ENCODE measurements at regions of chr1 and their contacts with region 1.

Region 1: DNA sequence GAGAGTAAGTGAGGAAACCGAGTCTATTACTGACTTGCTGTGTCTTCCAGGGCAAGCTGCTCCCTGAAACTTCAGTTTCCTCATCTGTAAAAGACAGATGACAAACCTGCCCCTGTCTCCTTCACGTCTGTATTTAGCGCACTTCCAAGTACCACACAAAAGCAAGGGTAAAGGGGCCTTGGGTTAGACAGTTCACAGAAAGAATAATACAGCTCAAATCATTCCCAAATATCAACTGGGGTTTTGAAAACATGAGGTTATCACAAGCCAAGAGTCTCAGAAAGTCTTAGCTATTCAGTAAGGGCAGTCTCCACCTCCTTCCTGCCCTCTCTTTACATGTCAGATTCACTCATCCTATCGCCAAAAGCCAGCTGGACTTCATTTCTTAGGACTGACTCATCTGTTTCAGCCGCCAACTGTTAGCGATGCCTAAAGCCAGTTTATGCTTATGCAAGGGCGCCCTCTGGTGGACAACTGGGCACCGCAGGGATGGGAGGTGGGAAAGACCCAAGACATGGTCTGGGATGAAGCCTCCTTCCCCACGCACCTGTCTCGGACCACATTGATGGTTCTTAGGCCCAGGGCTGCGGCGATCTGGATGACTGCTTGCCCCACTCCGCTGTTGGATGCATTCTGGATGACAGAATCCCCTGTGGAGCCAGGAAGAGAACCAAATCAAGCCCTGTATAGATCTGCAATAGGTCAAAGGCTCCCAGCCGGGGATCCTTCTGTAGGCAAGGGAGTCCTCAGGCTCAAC is 21.1 kb upstream of the SRSF4 start:
- DNase-seq: peak; percentile 78
- H3K4me3 Mint-ChIP-seq: no peak overlapping the region
- H3K27ac Mint-ChIP-seq: no peak overlapping the region
- H3K4me1 Mint-ChIP-seq: peaks cover 11% of the 10 kb centered on the region
- H3K27me3 Mint-ChIP-seq: no peaks in the 10 kb centered on the region

Region 2: GRCh38 chr1:29033829-29034466 is 168.8 kb before region 1 on chr1:
- intact Hi-C with region 1: loop called (anchors 1 kb)
- DNase-seq: no peak
- H3K4me3 Mint-ChIP-seq: no peak overlapping the region
- H3K27ac Mint-ChIP-seq: no peak overlapping the region
- H3K4me1 Mint-ChIP-seq: no peaks in the 10 kb centered on the region
- H3K27me3 Mint-ChIP-seq: no peaks in the 10 kb centered on the region

Region 3: GRCh38 chr1:29062157-29062942 is 140.4 kb before region 1 on chr1:
- intact Hi-C with region 1: loop called (anchors 5 kb)
- DNase-seq: no peak
- H3K4me3 Mint-ChIP-seq: peak overlapping the region; percentile 46
- H3K27ac Mint-ChIP-seq: peak overlapping the region; percentile 97
- H3K4me1 Mint-ChIP-seq: peaks cover 23% of the 10 kb centered on the region
- H3K27me3 Mint-ChIP-seq: no peaks in the 10 kb centered on the region

Region 4: DNA sequence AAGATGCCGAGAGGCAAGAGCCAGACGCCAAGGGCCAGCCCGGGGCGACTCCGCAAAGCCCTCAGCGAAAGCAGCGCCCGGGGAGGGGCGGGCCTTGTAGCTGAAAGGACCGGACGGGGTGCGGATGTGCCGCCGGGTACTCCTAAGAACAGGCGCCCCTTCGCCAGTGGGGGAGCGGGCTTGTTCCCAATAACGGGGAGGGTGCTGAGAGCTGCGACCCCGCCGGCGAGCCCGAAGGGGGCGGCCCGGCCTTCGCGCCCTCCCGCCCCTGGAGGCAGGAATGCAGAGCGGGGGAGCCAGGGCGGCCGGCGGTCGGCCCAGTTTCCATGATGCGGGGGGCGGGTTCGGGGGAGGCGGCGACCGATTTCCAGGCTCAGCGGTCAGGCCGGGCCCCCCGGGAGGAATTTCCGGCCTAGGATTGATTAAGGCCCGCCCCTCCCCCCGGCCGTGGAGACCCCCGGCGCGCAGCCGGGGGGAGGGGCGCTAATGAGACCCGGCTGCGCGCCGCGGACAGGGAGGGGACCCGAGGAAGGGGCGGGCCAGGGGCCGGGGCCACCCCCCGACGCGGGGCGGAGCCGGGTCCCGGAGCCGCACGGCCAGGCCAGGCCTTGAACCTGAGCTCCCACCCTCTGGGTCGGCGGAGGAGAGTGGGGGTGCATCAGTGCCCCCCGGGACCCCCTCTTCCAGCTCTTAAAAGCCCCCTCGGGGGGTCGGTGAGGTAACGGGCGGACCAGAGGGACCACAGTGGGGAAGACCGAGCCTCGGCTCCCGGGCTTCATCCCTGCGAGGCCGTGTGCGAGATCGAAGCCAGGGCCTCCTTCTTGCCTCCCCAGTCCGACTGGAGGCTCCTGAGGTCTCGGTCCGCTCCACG is 78.2 kb before region 1 on chr1:
- intact Hi-C with region 1: loop called (anchors 1 kb)
- DNase-seq: peak; percentile 46
- H3K4me3 Mint-ChIP-seq: peak overlapping the region; percentile 82
- H3K27ac Mint-ChIP-seq: peak overlapping the region; percentile 23
- H3K4me1 Mint-ChIP-seq: no peaks in the 10 kb centered on the region
- H3K27me3 Mint-ChIP-seq: peaks cover 29% of the 10 kb centered on the region

Region 5: DNA sequence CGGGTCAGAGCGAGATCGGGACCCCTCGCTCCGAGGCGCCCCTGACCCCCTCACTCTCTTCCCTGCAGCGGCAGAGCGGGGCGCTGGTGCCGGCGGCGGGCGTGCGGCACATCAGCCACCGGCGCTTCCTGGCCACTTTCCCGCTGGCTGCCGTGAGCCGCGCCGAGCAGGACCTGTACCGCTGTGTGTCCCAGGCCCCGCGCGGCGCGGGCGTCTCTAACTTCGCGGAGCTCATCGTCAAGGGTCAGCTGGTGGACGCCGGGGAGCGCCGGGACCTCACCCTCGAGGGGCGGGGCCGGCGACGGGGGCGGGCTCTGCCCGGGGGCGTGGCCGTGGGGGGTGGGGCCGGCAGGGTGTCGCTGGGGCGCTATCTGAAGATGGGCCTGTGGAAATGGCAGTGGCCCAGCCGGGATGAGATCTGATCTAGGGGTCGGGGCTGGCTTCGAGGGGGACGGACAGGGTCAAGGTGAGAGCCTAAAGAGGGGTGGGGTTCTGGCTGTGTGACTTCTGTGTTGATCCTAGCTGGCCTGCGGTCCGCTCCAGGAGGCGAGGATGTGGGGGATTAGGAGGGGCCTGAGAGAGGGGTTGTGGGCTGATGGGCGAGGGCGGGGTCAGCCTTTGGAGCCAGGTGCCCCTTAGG is 57.2 kb after region 1 on chr1:
- intact Hi-C with region 1: no loop called
- DNase-seq: peak; percentile 16
- H3K4me3 Mint-ChIP-seq: peak overlapping the region; percentile 64
- H3K27ac Mint-ChIP-seq: no peak overlapping the region
- H3K4me1 Mint-ChIP-seq: no peaks in the 10 kb centered on the region
- H3K27me3 Mint-ChIP-seq: peaks cover 44% of the 10 kb centered on the region